MCF 10A (cell line): ENCODE measurements at regions of chr11 and their contacts with region 1.

Region 1: GRCh38 chr11:124900464-124900863 is 2.8 kb upstream of the ROBO4 start:
- DNase-seq: peak; percentile 89
- H3K4me3 Mint-ChIP-seq: no peak overlapping the region
- H3K27ac Mint-ChIP-seq: peak overlapping the region; percentile 92
- H3K4me1 Mint-ChIP-seq: peaks cover 59% of the 10 kb centered on the region
- H3K27me3 Mint-ChIP-seq: no peaks in the 10 kb centered on the region
- CTCF ChIP-seq: no peak

Region 2: GRCh38 chr11:124865921-124866583 is 34.4 kb before region 1 on chr11:
- CTCF ChIA-PET with region 1: interaction called, 11 read pairs
- POLR2A ChIA-PET with region 1: no interaction called
- intact Hi-C with region 1: no loop called
- DNase-seq: peak; percentile 13
- H3K4me3 Mint-ChIP-seq: peak overlapping the region; percentile 47
- H3K27ac Mint-ChIP-seq: no peak overlapping the region
- H3K4me1 Mint-ChIP-seq: no peaks in the 10 kb centered on the region
- H3K27me3 Mint-ChIP-seq: peaks cover 88% of the 10 kb centered on the region
- CTCF ChIP-seq: peak; percentile 80

Region 3: GRCh38 chr11:124953753-124954589 is 53.5 kb after region 1 on chr11 and contains the start of gene CCDC15:
- CTCF ChIA-PET with region 1: interaction called, 3 read pairs
- POLR2A ChIA-PET with region 1: interaction called, 43 read pairs
- intact Hi-C with region 1: loop called (anchors 1 kb)
- DNase-seq: peak; percentile 98
- H3K4me3 Mint-ChIP-seq: no peak within 1 kb of the TSS
- H3K27ac Mint-ChIP-seq: no peak within 1 kb of the TSS
- H3K4me1 Mint-ChIP-seq: peaks cover 9% of the 10 kb centered on the region
- H3K27me3 Mint-ChIP-seq: no peaks in the 10 kb centered on the region
- CTCF ChIP-seq: no peak
- total RNA-seq, gene CCDC15: 2.8 and 3.4 TPM in 2 replicates

Region 4: GRCh38 chr11:125082611-125083311 is 182.3 kb after region 1 on chr11:
- CTCF ChIA-PET with region 1: no interaction called
- POLR2A ChIA-PET with region 1: interaction called, 7 read pairs
- intact Hi-C with region 1: loop called (anchors 2 kb)
- DNase-seq: peak; percentile 89
- H3K4me3 Mint-ChIP-seq: peak overlapping the region; percentile 68
- H3K27ac Mint-ChIP-seq: peak overlapping the region; percentile 96
- H3K4me1 Mint-ChIP-seq: peaks cover 48% of the 10 kb centered on the region
- H3K27me3 Mint-ChIP-seq: no peaks in the 10 kb centered on the region
- CTCF ChIP-seq: no peak

Region 5: GRCh38 chr11:125154378-125155099 is 254.1 kb after region 1 on chr11:
- CTCF ChIA-PET with region 1: no interaction called
- POLR2A ChIA-PET with region 1: no interaction called
- intact Hi-C with region 1: no loop called
- DNase-seq: no peak
- H3K4me3 Mint-ChIP-seq: no peak overlapping the region
- H3K27ac Mint-ChIP-seq: no peak overlapping the region
- H3K4me1 Mint-ChIP-seq: no peaks in the 10 kb centered on the region
- H3K27me3 Mint-ChIP-seq: no peaks in the 10 kb centered on the region
- CTCF ChIP-seq: no peak